ENCODE measurements at regions of chr10 and their contacts with region 1.

Region 1: GRCh38 chr10:30534465-30535144 is 94.9 kb downstream of the LYZL2 start:
- DNase-seq: peak; percentile 87
- H3K4me3 Mint-ChIP-seq: no peak overlapping the region
- H3K27ac Mint-ChIP-seq: no peak overlapping the region
- H3K4me1 Mint-ChIP-seq: peaks cover 14% of the 10 kb centered on the region
- H3K27me3 Mint-ChIP-seq: no peaks in the 10 kb centered on the region

Region 2: DNA sequence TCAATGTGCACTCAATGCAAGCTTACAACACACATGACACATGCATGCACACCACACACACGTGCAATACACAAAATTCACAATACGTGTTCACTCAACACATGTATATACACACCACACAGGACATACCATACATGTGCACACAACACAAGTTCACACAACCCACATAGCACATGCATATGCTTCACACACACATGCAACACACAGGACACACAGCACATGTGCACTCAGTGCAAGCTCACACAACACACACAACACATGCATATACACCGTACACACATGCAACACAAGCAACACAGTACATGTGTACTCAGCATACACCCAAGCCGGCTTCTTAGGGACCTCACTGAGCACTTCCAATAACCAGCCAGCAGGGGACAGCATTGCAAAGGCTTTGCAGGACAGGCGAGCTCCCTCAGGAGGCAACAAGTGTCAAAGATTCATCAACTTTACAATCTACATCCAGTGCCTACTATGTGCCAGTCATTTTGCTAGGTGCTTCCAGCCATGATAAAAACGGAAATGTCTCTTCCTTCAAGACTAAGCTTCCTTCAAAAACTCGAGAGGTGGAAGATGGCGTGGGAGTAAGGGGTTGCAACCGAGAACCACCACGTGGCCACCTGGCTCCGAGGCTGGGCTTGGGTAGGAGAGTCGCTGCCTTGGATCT is 536.3 kb before region 1 on chr10:
- CTCF ChIA-PET with region 1: no interaction called
- intact Hi-C with region 1: loop called (anchors 1 kb)
- DNase-seq: peak; percentile 86
- H3K4me3 Mint-ChIP-seq: no peak overlapping the region
- H3K27ac Mint-ChIP-seq: no peak overlapping the region
- H3K4me1 Mint-ChIP-seq: peaks cover 6% of the 10 kb centered on the region
- H3K27me3 Mint-ChIP-seq: peaks cover 43% of the 10 kb centered on the region

Region 3: GRCh38 chr10:30392564-30392990 is 142.0 kb before region 1 on chr10:
- CTCF ChIA-PET with region 1: interaction called, 35 read pairs
- intact Hi-C with region 1: loop called (anchors 1 kb)
- DNase-seq: peak; percentile 82
- H3K4me3 Mint-ChIP-seq: no peak overlapping the region
- H3K27ac Mint-ChIP-seq: no peak overlapping the region
- H3K4me1 Mint-ChIP-seq: peaks cover 3% of the 10 kb centered on the region
- H3K27me3 Mint-ChIP-seq: peaks cover 5% of the 10 kb centered on the region

Region 4: GRCh38 chr10:30413996-30414576 is 120.5 kb before region 1 on chr10:
- CTCF ChIA-PET with region 1: interaction called, 73 read pairs
- intact Hi-C with region 1: loop called (anchors 1 kb)
- DNase-seq: peak; percentile 43
- H3K4me3 Mint-ChIP-seq: no peak overlapping the region
- H3K27ac Mint-ChIP-seq: no peak overlapping the region
- H3K4me1 Mint-ChIP-seq: peaks cover 15% of the 10 kb centered on the region
- H3K27me3 Mint-ChIP-seq: no peaks in the 10 kb centered on the region

Region 5: DNA sequence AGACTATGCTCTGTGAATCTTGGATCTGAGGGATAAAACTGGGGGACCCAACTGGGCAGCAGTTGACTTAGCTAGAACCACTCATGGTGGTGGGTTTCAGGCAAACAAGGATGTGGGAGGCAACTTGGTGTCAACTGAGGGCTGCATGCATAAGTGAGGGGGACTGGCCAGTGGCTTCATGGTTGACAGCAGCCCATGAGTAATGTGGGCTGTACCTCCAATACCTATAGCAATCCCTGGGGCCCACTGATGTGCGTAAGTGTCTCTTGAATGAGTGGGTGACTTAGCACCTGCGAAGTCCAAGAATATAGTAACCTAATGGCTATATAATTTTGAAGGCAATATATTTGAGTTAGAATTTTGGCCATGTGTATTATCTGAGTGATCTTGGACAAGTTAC is 114.3 kb before region 1 on chr10:
- CTCF ChIA-PET with region 1: interaction called, 73 read pairs
- intact Hi-C with region 1: loop called (anchors 1 kb)
- DNase-seq: no peak
- H3K4me3 Mint-ChIP-seq: no peak overlapping the region
- H3K27ac Mint-ChIP-seq: no peak overlapping the region
- H3K4me1 Mint-ChIP-seq: peaks cover 24% of the 10 kb centered on the region
- H3K27me3 Mint-ChIP-seq: no peaks in the 10 kb centered on the region

Region 6: GRCh38 chr10:30519639-30520038 is 15.0 kb before region 1 on chr10:
- CTCF ChIA-PET with region 1: interaction called, 11 read pairs
- intact Hi-C with region 1: no loop called
- DNase-seq: no peak
- H3K4me3 Mint-ChIP-seq: no peak overlapping the region
- H3K27ac Mint-ChIP-seq: no peak overlapping the region
- H3K4me1 Mint-ChIP-seq: no peaks in the 10 kb centered on the region
- H3K27me3 Mint-ChIP-seq: no peaks in the 10 kb centered on the region

Region 7: GRCh38 chr10:30583778-30584415 is 49.3 kb after region 1 on chr10:
- CTCF ChIA-PET with region 1: interaction called, 10 read pairs
- intact Hi-C with region 1: no loop called
- DNase-seq: no peak
- H3K4me3 Mint-ChIP-seq: no peak overlapping the region
- H3K27ac Mint-ChIP-seq: no peak overlapping the region
- H3K4me1 Mint-ChIP-seq: peaks cover 3% of the 10 kb centered on the region
- H3K27me3 Mint-ChIP-seq: no peaks in the 10 kb centered on the region

Measured in activated naive CD4-positive, alpha-beta T cell treated with anti-CD3 and anti-CD28 coated beads for 36 hours (primary cell).